ENCODE measurements at regions of chr6 and their contacts with region 1.

Region 1: GRCh38 chr6:81455641-81456040 is 296.8 kb downstream of the TENT5A start:
- DNase-seq: no peak
- H3K4me3 ChIP-seq: no peak overlapping the region
- CTCF ChIP-seq: no peak

Region 2: GRCh38 chr6:81439417-81439816 is 16.2 kb before region 1 on chr6:
- CTCF ChIA-PET with region 1: no interaction called
- POLR2A ChIA-PET with region 1: no interaction called
- DNase-seq: no peak
- H3K4me3 ChIP-seq: no peak overlapping the region
- CTCF ChIP-seq: no peak

Region 3: DNA sequence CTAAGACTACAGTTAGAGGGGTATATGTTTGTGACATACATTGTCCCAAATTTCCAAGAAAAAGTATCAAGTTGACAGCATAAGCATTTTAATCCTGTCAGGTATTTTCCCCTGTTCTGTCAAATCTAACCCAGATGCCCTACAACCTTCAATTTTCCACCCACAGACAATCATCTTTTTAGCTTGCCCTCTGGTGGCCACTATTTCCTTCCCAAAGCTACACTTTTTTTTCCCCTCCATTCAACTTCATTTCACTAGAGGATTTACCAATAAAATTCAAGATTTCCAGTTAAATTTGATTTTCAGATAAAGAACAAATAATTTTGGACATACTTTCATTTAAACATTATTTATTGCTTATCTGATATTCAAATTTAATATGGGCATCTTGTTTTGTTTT is 10.2 kb after region 1 on chr6:
- CTCF ChIA-PET with region 1: interaction called, 10 read pairs
- POLR2A ChIA-PET with region 1: no interaction called
- DNase-seq: no peak
- H3K4me3 ChIP-seq: no peak overlapping the region
- CTCF ChIP-seq: peak; percentile 35